Right cardiac atrium (tissue), 5 donors: ENCODE measurements at regions of chr7 and their contacts with region 1.

Region 1: DNA sequence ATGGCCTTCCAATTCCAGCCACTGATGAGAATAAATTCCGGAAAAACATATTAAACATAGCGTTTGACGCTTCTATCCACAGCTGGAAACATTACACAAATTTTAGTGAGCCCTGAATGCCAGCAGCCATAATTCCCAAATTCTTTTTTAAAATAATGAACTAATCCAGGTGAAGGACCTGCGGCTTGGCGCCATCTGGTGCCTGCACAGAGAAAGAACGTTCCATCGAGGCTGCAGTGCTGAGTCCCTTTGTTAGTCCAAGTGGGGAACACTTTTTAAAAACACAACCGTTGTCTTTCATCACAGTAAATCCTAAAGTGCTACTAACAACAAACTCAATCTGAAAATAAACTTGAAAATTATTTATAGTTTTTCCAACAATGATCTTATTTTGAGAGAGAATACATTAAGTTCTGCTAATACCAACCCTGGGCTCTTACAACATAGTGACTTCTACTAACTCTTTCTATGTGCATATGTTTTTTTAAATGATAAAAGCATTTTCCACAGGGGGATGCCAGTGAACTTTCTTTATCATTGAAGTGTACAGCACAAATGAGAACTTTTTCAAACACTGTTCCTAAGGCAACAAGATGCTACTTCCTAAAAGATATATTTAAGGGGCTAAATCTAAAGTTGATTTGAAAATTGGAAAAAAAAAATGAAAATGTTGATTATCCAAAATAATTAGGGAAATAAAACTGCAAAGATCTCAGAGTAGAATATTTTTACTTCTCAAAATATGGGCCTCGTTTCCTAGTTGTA is 166.9 kb upstream of the RNF32 start:
- DNase-seq: peak in 2 of 3 donors; percentile 32 to 73
- ATAC-seq: peak; percentile 33 to 72
- H3K4me3 ChIP-seq: no peak overlapping the region
- H3K27ac ChIP-seq: no peak overlapping the region
- H3K4me1 ChIP-seq: no peaks in the 10 kb centered on the region
- H3K27me3 ChIP-seq: no peaks in the 10 kb centered on the region

Region 2: DNA sequence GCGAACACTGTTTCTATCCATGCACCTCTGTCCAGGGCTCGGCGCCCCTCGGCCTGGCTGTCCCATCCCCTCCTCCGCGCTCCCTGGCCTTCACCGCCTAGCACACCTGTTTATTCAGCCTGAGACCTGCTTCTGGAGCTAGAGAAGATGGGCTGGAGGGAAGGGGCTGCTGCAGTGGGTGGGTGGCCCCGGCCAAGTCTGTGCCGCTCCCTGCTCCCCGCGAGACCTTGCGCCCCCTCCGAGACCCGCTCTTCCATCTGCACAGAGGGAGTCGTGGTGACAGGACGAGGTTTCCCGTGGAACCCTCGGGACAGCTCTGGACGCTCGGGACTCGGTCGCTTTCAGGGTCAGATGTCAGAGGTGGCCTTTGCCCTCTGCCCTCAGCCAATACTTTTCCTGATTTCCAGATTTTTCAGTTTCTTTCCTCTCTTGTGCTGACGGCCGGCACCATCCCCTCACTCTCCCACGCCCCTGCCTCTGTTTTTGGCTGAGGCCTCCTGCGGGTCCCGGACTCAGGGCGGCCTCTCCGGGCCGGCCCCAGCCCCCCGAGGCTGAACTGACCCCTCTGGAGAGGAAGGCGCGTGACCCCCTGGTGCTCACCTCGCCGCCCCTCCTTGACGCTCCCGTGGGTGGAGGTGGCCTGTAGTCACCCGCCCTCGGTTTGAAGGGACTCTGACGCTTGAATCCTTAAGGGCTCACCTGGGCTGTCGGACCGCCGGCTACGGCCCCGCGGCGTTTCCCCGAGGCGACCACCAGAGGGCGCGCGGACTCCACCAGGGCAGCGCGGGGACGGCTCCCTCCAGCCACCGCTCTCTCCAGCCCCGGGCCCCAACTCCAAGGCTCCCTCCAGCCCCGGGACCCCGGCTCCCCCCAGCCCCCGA is 677.0 kb before region 1 on chr7:
- intact Hi-C with region 1: loop called (anchors 2 to 5 kb)
- DNase-seq: peak; percentile 50 to 86 (median 81)
- ATAC-seq: peak; percentile 50 to 77
- H3K4me3 ChIP-seq: no peak overlapping the region
- H3K27ac ChIP-seq: no peak overlapping the region
- H3K4me1 ChIP-seq: no peaks in the 10 kb centered on the region
- H3K27me3 ChIP-seq: no peaks in the 10 kb centered on the region

Region 3: GRCh38 chr7:155815332-155816191 is 658.1 kb before region 1 on chr7:
- intact Hi-C with region 1: loop called in 1 of 4 experiments (anchors 5 kb)
- DNase-seq: peak in 2 of 3 donors; percentile 56 to 65
- ATAC-seq: peak; percentile 61 to 69
- H3K4me3 ChIP-seq: no peak overlapping the region
- H3K27ac ChIP-seq: no peak overlapping the region
- H3K4me1 ChIP-seq: no peaks in the 10 kb centered on the region
- H3K27me3 ChIP-seq: no peaks in the 10 kb centered on the region

Region 4: DNA sequence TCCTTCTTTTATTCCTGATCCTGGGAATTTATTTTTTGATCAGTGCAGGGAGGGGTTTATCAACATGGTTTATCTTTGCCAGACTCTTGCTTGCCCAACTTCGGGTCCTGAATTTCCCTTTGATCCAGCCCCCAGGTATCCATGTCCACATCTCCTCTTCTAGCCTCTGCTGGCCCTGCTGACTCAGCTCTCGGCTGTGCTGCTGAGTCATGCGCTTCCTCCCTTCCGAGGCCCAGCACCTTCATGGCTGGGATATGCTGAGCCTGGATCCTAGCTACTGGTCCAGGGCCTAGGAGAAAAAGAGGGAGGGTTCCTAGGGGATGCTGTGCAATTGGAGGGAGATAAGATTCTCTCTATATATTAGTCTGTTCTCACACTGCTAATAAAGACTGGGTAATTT is 280.7 kb before region 1 on chr7:
- intact Hi-C with region 1: no loop called
- DNase-seq: no peak
- ATAC-seq: no peak
- H3K4me3 ChIP-seq: no peak overlapping the region
- H3K27ac ChIP-seq: no peak overlapping the region
- H3K4me1 ChIP-seq: no peaks in the 10 kb centered on the region
- H3K27me3 ChIP-seq: no peaks in the 10 kb centered on the region

Region 5: GRCh38 chr7:156327436-156327835 is 146.2 kb before region 1 on chr7:
- intact Hi-C with region 1: no loop called
- DNase-seq: no peak
- ATAC-seq: no peak
- H3K4me3 ChIP-seq: no peak overlapping the region
- H3K27ac ChIP-seq: no peak overlapping the region
- H3K4me1 ChIP-seq: no peaks in the 10 kb centered on the region
- H3K27me3 ChIP-seq: no peaks in the 10 kb centered on the region

Region 6: GRCh38 chr7:156344595-156344994 is 129.1 kb before region 1 on chr7:
- intact Hi-C with region 1: no loop called
- DNase-seq: no peak
- ATAC-seq: no peak
- H3K4me3 ChIP-seq: no peak overlapping the region
- H3K27ac ChIP-seq: no peak overlapping the region
- H3K4me1 ChIP-seq: no peaks in the 10 kb centered on the region
- H3K27me3 ChIP-seq: no peaks in the 10 kb centered on the region

Region 7: DNA sequence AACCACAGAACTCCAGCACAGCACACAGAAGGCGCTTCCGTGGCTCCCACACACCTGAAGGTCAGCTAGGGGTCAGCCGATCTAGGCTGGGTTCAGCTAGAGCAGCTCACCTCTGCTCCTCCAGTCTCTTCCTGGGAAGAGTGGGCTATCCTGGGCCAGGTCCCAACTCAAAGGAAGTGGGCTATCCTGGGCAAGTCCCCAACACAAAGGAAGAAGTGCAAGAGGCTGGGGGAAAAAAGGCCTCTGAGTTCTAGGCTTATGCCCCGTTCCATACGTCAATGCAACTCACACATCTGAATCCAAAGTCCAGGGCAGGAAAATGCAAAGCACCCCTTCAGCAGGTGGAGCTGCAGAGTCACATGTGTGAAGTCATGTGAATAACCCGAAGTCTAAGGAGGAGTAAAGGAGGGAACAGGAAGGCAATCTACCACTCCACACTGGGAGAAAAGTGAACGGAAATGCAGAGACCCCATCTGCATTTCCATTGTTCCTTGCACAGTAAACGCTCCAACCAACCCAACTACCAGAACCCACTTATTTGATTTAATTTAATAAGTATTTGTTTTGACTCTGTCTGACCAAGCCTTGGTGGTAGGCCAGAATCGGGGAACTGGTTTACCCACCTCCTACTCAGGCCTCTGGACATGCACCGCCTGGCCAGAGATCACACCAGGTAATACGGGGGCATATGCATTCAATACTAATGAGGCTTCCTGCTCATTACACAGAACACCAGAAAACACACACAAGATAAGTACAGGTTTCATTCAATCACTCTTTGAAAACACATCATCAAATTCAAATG is 71.5 kb after region 1 on chr7:
- intact Hi-C with region 1: no loop called
- DNase-seq: no peak
- ATAC-seq: no peak
- H3K4me3 ChIP-seq: no peak overlapping the region
- H3K27ac ChIP-seq: no peak overlapping the region
- H3K4me1 ChIP-seq: no peaks in the 10 kb centered on the region
- H3K27me3 ChIP-seq: no peaks in the 10 kb centered on the region